ENCODE measurements at regions of chr7 and their contacts with region 1.

Region 1: DNA sequence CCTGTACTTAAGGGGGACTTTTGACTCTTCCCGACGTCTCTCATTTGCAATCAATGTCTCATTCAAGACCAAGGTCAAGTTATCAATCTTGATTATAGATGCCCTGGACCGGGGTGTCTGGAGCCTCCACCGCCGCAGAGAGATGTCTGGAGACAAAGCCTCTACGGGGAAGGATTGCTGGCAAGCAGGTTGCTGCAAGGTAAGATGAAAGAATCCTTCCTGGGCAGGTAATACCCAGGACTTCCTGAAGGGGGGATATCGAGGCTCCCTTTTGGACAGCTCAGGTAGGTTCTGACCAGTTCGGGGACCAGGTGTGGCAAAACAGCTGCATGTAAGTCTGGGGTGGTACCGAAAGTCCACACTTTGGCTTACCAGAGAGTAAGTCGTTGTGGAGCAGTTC is 12.5 kb upstream of the CUX1 start:
- DNase-seq: no peak
- ATAC-seq: 0 out of 2 replicates have a peak, but pooled peaks have one; percentile 44
- H3K4me3 ChIP-seq: no peak overlapping the region
- H3K27ac ChIP-seq: no peak overlapping the region
- H3K4me1 ChIP-seq: no peaks in the 10 kb centered on the region
- H3K27me3 ChIP-seq: peaks cover 6% of the 10 kb centered on the region; the same call in 1 of the 2 replicates
- CTCF ChIP-seq: no peak

Region 2: DNA sequence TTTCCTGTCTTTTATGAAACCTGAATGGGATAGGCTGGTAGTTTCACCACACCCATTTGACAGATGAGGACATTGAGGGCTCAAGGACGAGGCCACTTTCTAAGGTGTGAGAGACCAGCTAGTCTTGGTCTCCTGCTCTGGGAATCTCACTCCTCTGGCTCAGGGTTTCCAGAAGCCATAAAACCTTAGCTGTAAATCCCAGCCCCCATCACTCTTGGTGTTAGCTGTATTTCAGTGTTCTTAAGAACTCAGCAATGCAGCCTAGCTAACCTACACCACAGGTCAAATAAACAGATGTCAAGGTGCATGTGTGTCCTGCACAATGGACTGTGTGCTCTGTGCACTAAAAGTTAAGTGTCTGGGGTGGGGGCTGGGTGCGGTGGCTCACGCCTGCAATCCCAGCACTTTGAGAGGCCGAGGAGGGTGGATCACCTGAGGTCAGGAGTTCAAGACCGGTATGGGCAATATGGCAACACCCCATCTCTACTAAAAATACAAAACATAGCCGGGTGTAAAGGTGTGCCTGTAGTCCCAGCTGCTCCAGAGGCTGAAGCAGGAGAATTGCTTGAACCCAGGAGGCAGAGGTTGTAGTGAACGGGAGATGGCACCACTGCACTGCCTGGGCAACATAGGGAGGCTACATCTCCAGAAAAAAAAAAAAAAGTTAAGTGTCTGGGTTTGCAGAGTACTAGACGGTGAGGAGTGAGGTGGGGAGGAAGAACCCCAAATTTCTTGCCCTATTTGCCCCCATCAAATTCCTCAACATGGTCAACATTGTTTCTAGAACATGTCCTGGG is 1085.2 kb before region 1 on chr7:
- CTCF ChIA-PET with region 1: no interaction called
- POLR2A ChIA-PET with region 1: no interaction called
- in situ Hi-C with region 1: no loop called
- intact Hi-C with region 1: no loop called
- DNase-seq: no peak
- ATAC-seq: peak; percentile 74
- H3K4me3 ChIP-seq: no peak overlapping the region
- H3K27ac ChIP-seq: no peak overlapping the region
- H3K4me1 ChIP-seq: no peaks in the 10 kb centered on the region
- H3K27me3 ChIP-seq: no peaks in the 10 kb centered on the region
- CTCF ChIP-seq: no peak

Region 3: DNA sequence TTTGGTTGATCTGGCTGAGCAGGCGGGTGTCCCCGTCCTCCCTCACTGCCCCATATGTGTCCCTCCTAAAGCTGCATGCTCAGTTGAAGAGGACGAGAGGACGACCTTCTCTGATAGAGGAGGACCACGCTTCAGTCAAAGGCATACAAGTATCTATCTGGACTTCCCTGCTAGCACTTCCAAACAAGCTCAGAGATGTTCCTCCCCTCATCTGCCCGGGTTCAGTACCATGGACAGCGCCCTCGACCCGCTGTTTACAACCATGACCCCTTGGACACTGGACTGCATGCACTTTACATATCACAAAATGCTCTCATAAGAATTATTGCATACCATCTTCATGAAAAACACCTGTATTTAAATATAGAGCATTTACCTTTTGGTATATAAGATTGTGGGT is 746.6 kb before region 1 on chr7:
- CTCF ChIA-PET with region 1: no interaction called
- POLR2A ChIA-PET with region 1: no interaction called
- in situ Hi-C with region 1: no loop called
- intact Hi-C with region 1: no loop called
- DNase-seq: no peak
- ATAC-seq: no peak
- H3K4me3 ChIP-seq: no peak overlapping the region
- H3K27ac ChIP-seq: no peak overlapping the region
- H3K4me1 ChIP-seq: no peaks in the 10 kb centered on the region
- H3K27me3 ChIP-seq: peaks cover 17% of the 10 kb centered on the region
- CTCF ChIP-seq: no peak

Region 4: DNA sequence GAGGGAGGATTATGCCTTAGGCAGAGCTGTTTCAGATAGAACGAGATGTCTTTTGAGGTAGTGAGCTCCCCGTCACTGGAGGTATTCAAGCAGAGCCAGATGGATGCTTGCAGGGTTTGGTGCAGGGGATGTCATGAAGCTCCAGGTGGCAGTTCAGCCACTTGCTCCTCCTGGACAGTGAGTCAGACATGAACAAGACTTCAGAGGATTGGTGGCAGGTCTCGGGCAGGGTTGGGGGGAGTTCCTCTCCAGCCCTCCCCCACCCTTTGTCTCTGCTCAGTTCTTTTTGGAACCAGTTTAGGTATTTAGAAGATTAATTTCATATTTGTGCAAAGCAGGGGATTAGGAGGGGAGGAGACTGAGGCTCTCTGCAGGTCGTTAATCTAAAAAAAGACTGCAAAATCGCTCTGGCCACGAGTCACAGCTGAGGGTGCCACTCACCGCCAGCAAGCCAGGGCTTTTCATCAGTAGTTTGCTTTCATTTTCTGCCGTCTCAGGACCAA is 154.3 kb before region 1 on chr7:
- CTCF ChIA-PET with region 1: no interaction called
- POLR2A ChIA-PET with region 1: interaction called, 12 read pairs
- in situ Hi-C with region 1: no loop called
- intact Hi-C with region 1: no loop called
- DNase-seq: no peak
- ATAC-seq: peak; percentile 53; the same call in 1 of the 2 replicates
- H3K4me3 ChIP-seq: peak overlapping the region in 1 of 2 experiments; percentile 19; a peak in 2 of 4 replicates
- H3K27ac ChIP-seq: no peak overlapping the region
- H3K4me1 ChIP-seq: peaks cover 7% of the 10 kb centered on the region; the same call in 1 of the 2 replicates
- H3K27me3 ChIP-seq: no peaks in the 10 kb centered on the region
- CTCF ChIP-seq: no peak

Region 5: GRCh38 chr7:101924171-101924570 is 119.2 kb after region 1 on chr7:
- CTCF ChIA-PET with region 1: no interaction called
- POLR2A ChIA-PET with region 1: no interaction called
- in situ Hi-C with region 1: no loop called
- intact Hi-C with region 1: no loop called
- DNase-seq: peak; percentile 76
- ATAC-seq: peak; percentile 75; the same call in 1 of the 2 replicates
- H3K4me3 ChIP-seq: no peak overlapping the region
- H3K27ac ChIP-seq: no peak overlapping the region
- H3K4me1 ChIP-seq: no peaks in the 10 kb centered on the region
- H3K27me3 ChIP-seq: no peaks in the 10 kb centered on the region
- CTCF ChIP-seq: no peak